ENCODE measurements at regions of chr11 and their contacts with region 1.

Region 1: GRCh38 chr11:28836285-28837081 is 728.3 kb downstream of the METTL15 start:
- DNase-seq: peak; percentile 81
- H3K4me3 ChIP-seq: no peak overlapping the region
- H3K27ac ChIP-seq: peak overlapping the region; percentile 96
- H3K4me1 ChIP-seq: peaks cover 70% of the 10 kb centered on the region
- H3K27me3 ChIP-seq: no peaks in the 10 kb centered on the region
- CTCF ChIP-seq: no peak
- POLR2A ChIP-seq: peak; percentile 82

Region 2: DNA sequence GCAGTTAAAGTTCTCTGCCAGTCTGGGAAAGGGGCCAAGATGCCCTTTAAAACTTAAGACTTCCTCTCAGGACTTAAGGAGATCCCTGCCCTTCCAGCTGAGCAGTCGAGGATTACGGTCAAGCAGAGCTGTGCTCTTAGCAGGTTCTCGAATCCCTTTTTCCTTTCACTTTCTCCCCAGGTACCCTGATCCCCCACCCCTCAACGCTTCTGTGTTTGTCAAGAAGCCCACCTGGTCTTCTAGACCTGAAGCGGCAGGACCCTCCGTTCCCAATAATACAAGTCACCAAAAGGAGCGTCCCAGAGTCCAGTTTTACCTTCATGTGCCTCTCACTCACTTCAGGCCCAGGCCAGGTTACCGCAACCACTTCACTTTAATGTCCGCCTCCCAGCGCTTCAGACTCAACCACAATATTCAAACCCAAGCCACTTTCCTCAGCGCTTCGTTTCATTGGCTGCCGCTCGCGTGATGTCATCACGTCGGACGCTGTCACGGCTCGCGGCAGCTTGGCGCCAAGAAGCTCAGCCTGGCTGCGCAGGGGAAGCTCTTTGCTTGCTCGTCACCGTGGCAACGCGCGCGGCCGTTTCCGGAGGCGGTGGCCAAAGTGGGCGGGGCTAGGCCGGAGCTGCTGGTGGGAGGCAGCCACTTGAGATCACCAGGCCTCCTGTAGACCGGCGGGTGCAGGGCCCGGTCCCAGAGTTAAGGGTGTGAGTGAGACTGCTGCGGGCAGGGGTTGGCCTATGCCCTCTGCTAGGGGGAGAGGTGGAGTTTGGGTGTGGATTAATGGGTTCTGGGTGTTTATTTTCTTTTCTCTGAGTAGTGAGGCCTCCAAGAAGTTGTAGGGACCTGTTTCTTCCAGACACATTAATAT is 728.5 kb before region 1 on chr11 and contains the starts of genes KIF18A and METTL15:
- CTCF ChIA-PET with region 1: no interaction called
- POLR2A ChIA-PET with region 1: no interaction called
- dilution Hi-C with region 1: no loop called
- intact Hi-C with region 1: loop called (anchors 2 kb)
- DNase-seq: peak; percentile 100
- H3K4me3 ChIP-seq: peak within 1 kb of the TSS; percentile 74 to 99 (median 87)
- H3K27ac ChIP-seq: peak within 1 kb of the TSS; percentile 98
- H3K4me1 ChIP-seq: peaks cover 36% of the 10 kb centered on the region
- H3K27me3 ChIP-seq: no peaks in the 10 kb centered on the region
- CTCF ChIP-seq: no peak
- POLR2A ChIP-seq: peak; percentile 68
- total RNA-seq, gene KIF18A: 14.1 and 18.5 TPM in 2 replicates
- total RNA-seq, gene METTL15: 10.9 and 12.1 TPM in 2 replicates

Region 3: DNA sequence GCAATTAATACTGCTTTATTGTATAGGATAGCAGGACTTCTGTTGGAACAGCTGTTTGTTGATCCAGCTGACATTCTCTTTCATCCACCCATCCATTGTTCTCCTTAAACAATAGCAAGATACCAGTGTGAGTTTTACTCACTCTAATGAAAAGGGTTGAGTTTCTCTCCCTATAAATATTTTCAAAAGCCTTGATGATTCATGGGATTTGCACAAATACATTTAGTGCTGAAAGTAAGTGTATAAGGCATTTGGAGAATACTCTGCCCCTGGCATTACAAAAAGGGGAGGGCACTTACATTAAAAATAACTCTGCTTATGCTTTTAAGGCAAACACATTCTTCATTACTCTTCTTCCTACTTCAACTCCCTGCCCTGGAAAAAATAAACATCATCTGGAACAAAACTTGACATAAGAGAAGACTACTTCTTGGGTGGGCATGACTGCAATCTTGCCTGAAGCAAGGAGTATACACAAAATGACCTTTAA is 93.4 kb before region 1 on chr11:
- CTCF ChIA-PET with region 1: no interaction called
- POLR2A ChIA-PET with region 1: no interaction called
- dilution Hi-C with region 1: no loop called
- intact Hi-C with region 1: loop called (anchors 1 kb)
- DNase-seq: peak; percentile 91
- H3K4me3 ChIP-seq: no peak overlapping the region
- H3K27ac ChIP-seq: peak overlapping the region; percentile 70
- H3K4me1 ChIP-seq: peaks cover 45% of the 10 kb centered on the region
- H3K27me3 ChIP-seq: no peaks in the 10 kb centered on the region
- CTCF ChIP-seq: no peak
- POLR2A ChIP-seq: no peak

Region 4: GRCh38 chr11:28767574-28767973 is 68.9 kb before region 1 on chr11:
- CTCF ChIA-PET with region 1: interaction called, 3 read pairs
- POLR2A ChIA-PET with region 1: no interaction called
- dilution Hi-C with region 1: no loop called
- intact Hi-C with region 1: loop called (anchors 1 kb)
- DNase-seq: peak; percentile 74
- H3K4me3 ChIP-seq: no peak overlapping the region
- H3K27ac ChIP-seq: peak overlapping the region; percentile 82
- H3K4me1 ChIP-seq: peaks cover 15% of the 10 kb centered on the region
- H3K27me3 ChIP-seq: no peaks in the 10 kb centered on the region
- CTCF ChIP-seq: no peak
- POLR2A ChIP-seq: no peak

Region 5: GRCh38 chr11:28910926-28911325 is 74.4 kb after region 1 on chr11:
- CTCF ChIA-PET with region 1: no interaction called
- POLR2A ChIA-PET with region 1: no interaction called
- dilution Hi-C with region 1: no loop called
- intact Hi-C with region 1: no loop called
- DNase-seq: no peak
- H3K4me3 ChIP-seq: no peak overlapping the region
- H3K27ac ChIP-seq: no peak overlapping the region
- H3K4me1 ChIP-seq: peaks cover 23% of the 10 kb centered on the region
- H3K27me3 ChIP-seq: no peaks in the 10 kb centered on the region
- CTCF ChIP-seq: no peak
- POLR2A ChIP-seq: no peak

Region 6: GRCh38 chr11:28951191-28951590 is 114.7 kb after region 1 on chr11:
- CTCF ChIA-PET with region 1: no interaction called
- POLR2A ChIA-PET with region 1: no interaction called
- dilution Hi-C with region 1: no loop called
- intact Hi-C with region 1: loop called (anchors 1 kb)
- DNase-seq: peak; percentile 69
- H3K4me3 ChIP-seq: no peak overlapping the region
- H3K27ac ChIP-seq: no peak overlapping the region
- H3K4me1 ChIP-seq: peaks cover 6% of the 10 kb centered on the region
- H3K27me3 ChIP-seq: no peaks in the 10 kb centered on the region
- CTCF ChIP-seq: no peak
- POLR2A ChIP-seq: no peak

Region 7: GRCh38 chr11:29029452-29029851 is 193.0 kb after region 1 on chr11:
- CTCF ChIA-PET with region 1: no interaction called
- POLR2A ChIA-PET with region 1: no interaction called
- dilution Hi-C with region 1: no loop called
- intact Hi-C with region 1: no loop called
- DNase-seq: no peak
- H3K4me3 ChIP-seq: no peak overlapping the region
- H3K27ac ChIP-seq: no peak overlapping the region
- H3K4me1 ChIP-seq: peaks cover 4% of the 10 kb centered on the region
- H3K27me3 ChIP-seq: no peaks in the 10 kb centered on the region
- CTCF ChIP-seq: no peak
- POLR2A ChIP-seq: no peak

Region 8: GRCh38 chr11:29119707-29120695 is 283.5 kb after region 1 on chr11:
- CTCF ChIA-PET with region 1: interaction called, 5 read pairs
- POLR2A ChIA-PET with region 1: no interaction called
- dilution Hi-C with region 1: no loop called
- intact Hi-C with region 1: loop called (anchors 1 kb)
- DNase-seq: peak; percentile 99
- H3K4me3 ChIP-seq: peak overlapping the region in 2 of 3 experiments; percentile 25 to 62
- H3K27ac ChIP-seq: peak overlapping the region; percentile 100
- H3K4me1 ChIP-seq: peaks cover 33% of the 10 kb centered on the region
- H3K27me3 ChIP-seq: no peaks in the 10 kb centered on the region
- CTCF ChIP-seq: no peak
- POLR2A ChIP-seq: peak; percentile 74

Region 9: DNA sequence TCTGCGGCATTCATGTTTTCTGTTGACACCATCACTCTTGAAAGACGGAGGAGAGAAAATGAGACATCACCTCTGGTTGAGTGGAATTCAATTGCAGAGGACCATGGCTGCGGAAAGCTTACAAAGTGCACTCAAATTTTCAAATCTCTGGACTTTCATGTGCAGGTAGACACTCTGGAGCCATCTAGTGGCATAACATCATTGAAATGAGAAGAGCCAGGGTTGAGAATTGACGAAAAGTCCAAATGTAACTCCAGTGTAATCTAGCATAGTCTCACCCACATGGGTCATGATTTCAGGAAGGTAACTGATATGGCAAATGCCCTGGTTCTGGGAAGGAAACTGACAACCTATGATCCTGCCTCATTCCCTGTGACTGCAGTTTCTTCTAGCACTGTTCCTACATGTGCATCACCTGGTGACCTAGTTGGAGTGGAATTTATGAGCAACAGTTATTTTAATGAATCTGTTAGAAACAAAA is 492.5 kb after region 1 on chr11:
- CTCF ChIA-PET with region 1: interaction called, 9 read pairs
- POLR2A ChIA-PET with region 1: no interaction called
- dilution Hi-C with region 1: no loop called
- intact Hi-C with region 1: loop called (anchors 2 kb)
- DNase-seq: peak; percentile 75
- H3K4me3 ChIP-seq: no peak overlapping the region
- H3K27ac ChIP-seq: no peak overlapping the region
- H3K4me1 ChIP-seq: peaks cover 7% of the 10 kb centered on the region
- H3K27me3 ChIP-seq: no peaks in the 10 kb centered on the region
- CTCF ChIP-seq: peak; percentile 63 to 66
- POLR2A ChIP-seq: no peak

Measured in endothelial cell of umbilical vein (primary cell).